ENCODE measurements at regions of chr22 and their contacts with region 1.

Region 1: DNA sequence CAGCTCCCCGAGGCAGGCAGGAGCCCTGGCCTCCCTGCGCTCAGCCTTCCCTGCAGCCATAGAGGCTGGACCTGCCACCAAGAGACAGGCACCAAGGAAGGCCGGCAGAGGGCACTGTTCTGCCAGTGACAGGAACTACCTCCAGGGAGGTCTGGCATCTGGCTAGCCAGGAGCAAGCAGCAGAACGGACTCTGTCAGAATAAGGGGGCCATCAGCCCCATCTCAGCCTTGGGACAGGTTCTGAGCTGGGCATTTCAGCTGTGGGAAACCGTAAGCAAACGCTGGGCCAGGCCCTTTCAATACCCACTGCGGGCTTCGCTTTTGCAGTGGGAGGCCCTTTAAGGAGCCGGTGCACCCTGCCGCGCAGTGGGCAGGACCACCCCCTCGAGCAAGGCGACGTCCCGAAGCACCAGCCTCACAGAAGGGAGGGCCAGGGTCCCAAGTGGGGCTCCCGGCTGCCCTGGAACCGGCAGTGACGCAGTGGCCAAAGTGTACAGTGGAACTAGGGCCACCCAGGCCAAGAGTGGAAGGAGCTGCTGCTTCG is 18.2 kb downstream of the IFT27 start:
- DNase-seq: peak; percentile 77
- ATAC-seq: peak; percentile 93
- H3K4me3 ChIP-seq: no peak overlapping the region
- H3K4me3 Mint-ChIP-seq: no peak overlapping the region
- H3K27ac ChIP-seq: no peak overlapping the region
- H3K27ac Mint-ChIP-seq: no peak overlapping the region
- H3K4me1 ChIP-seq: no peaks in the 10 kb centered on the region
- H3K4me1 Mint-ChIP-seq: no peaks in the 10 kb centered on the region
- H3K27me3 ChIP-seq: peaks cover 0 to 20% (median 1%) of the 10 kb centered on the region in 4 experiments
- H3K27me3 Mint-ChIP-seq: peaks cover 18% of the 10 kb centered on the region
- CTCF ChIP-seq: peak; percentile 84

Region 2: DNA sequence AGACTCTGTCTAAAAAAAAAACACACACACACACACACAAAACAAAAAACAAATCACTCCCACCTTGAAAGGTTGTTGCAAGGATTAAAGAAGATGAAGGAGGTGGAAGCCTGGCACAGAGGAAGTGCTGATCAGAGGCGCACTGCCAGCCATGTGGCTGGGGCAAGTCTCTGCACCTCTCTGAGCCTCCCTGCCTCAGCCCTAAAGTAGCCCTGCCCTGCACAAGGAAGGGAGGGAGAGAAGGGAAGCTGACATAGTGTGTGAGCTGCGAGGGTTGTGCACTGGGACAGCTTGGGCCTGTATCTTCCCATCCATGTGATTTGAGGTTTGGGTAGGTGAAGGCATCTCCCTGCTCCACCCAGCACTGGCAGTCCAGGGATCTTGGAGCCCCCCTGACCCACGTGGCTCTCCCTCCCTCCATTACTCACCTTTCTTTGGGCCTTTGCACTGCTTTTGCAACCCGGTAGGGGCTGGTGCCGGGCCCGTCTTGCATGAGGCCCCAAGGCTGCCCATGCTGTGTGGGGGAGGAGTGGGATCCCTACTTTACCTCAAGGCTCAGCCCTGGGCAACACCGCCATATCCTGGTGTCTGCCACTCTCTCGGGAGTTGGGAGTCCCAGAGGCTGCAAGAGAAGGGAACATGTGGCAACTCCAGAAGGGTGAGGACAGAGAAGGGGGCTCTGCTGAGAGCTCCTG is 12.3 kb before region 1 on chr22:
- CTCF ChIA-PET with region 1: interaction called, 11 read pairs
- POLR2A ChIA-PET with region 1: no interaction called
- intact Hi-C with region 1: no loop called
- DNase-seq: no peak
- ATAC-seq: no peak
- H3K4me3 ChIP-seq: no peak overlapping the region
- H3K4me3 Mint-ChIP-seq: no peak overlapping the region
- H3K27ac ChIP-seq: no peak overlapping the region
- H3K27ac Mint-ChIP-seq: no peak overlapping the region
- H3K4me1 ChIP-seq: no peaks in the 10 kb centered on the region
- H3K4me1 Mint-ChIP-seq: no peaks in the 10 kb centered on the region
- H3K27me3 ChIP-seq: peaks cover 0 to 9% (median 0%) of the 10 kb centered on the region in 4 experiments
- H3K27me3 Mint-ChIP-seq: peaks cover 14% of the 10 kb centered on the region
- CTCF ChIP-seq: no peak

Region 3: GRCh38 chr22:36948273-36949225 is 190.8 kb after region 1 on chr22:
- CTCF ChIA-PET with region 1: no interaction called
- POLR2A ChIA-PET with region 1: no interaction called
- intact Hi-C with region 1: no loop called
- DNase-seq: no peak
- ATAC-seq: no peak
- H3K4me3 ChIP-seq: no peak overlapping the region
- H3K4me3 Mint-ChIP-seq: no peak overlapping the region
- H3K27ac ChIP-seq: no peak overlapping the region
- H3K27ac Mint-ChIP-seq: no peak overlapping the region
- H3K4me1 ChIP-seq: no peaks in the 10 kb centered on the region
- H3K4me1 Mint-ChIP-seq: no peaks in the 10 kb centered on the region
- H3K27me3 ChIP-seq: no peaks in the 10 kb centered on the region
- H3K27me3 Mint-ChIP-seq: peaks cover 10% of the 10 kb centered on the region
- CTCF ChIP-seq: no peak

Region 4: GRCh38 chr22:37043828-37044538 is 286.2 kb after region 1 on chr22:
- CTCF ChIA-PET with region 1: interaction called, 10 read pairs
- POLR2A ChIA-PET with region 1: no interaction called
- intact Hi-C with region 1: no loop called
- DNase-seq: peak; percentile 70
- ATAC-seq: peak; percentile 95
- H3K4me3 ChIP-seq: no peak overlapping the region
- H3K4me3 Mint-ChIP-seq: no peak overlapping the region
- H3K27ac ChIP-seq: no peak overlapping the region
- H3K27ac Mint-ChIP-seq: peak overlapping the region; percentile 67
- H3K4me1 ChIP-seq: peaks cover 9 to 14% of the 10 kb centered on the region in 2 donors
- H3K4me1 Mint-ChIP-seq: peaks cover 15% of the 10 kb centered on the region
- H3K27me3 ChIP-seq: no peaks in the 10 kb centered on the region
- H3K27me3 Mint-ChIP-seq: peaks cover 16% of the 10 kb centered on the region
- CTCF ChIP-seq: peak; percentile 67

Measured in B cell (primary cell).